ENCODE measurements at regions of chr5 and their contacts with region 1.

Region 1: DNA sequence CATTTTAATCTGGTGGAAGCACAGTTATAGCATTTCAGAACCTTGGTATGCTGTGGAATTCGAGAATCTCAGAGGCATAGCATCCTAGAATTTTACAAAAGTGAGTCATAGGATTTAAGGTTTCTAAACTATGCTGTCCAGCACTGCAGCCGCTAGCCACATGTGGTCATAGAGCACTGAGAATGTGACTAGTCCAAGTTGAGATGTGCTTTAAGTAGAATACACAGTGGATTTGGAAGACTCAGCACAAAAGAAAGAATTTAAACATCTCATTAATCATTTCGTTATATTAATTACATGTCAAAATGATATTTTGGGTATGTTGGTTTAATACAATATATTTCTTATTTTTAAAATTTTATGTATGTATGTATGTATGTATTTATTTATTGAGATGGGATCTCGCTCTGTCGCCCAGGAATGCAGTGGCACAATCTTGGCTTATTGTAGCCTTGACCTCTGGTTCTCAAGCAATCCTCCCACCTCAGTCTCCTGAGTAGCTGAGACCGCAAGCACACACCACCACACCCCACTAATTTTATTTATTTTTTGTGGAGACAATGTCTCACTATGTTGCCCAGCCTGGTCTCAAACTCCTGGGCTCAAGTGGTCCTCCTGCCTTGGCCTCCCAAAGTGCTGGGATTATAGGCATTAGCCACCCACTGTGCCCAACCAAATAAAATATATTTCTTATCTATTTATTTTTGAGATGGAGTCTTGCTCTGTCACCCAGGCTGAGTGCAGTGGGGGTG is 20.4 kb upstream of the RPS14 start:
- DNase-seq: peak in 1 of 2 experiments; percentile 15
- H3K4me3 ChIP-seq: no peak overlapping the region
- H3K4me3 Mint-ChIP-seq: no peak overlapping the region
- H3K27ac Mint-ChIP-seq: no peak overlapping the region
- H3K4me1 ChIP-seq: peaks cover 43% of the 10 kb centered on the region
- H3K4me1 Mint-ChIP-seq: peaks cover 21% of the 10 kb centered on the region
- H3K27me3 ChIP-seq: no peaks in the 10 kb centered on the region
- H3K27me3 Mint-ChIP-seq: no peaks in the 10 kb centered on the region
- CTCF ChIP-seq: no peak

Region 2: DNA sequence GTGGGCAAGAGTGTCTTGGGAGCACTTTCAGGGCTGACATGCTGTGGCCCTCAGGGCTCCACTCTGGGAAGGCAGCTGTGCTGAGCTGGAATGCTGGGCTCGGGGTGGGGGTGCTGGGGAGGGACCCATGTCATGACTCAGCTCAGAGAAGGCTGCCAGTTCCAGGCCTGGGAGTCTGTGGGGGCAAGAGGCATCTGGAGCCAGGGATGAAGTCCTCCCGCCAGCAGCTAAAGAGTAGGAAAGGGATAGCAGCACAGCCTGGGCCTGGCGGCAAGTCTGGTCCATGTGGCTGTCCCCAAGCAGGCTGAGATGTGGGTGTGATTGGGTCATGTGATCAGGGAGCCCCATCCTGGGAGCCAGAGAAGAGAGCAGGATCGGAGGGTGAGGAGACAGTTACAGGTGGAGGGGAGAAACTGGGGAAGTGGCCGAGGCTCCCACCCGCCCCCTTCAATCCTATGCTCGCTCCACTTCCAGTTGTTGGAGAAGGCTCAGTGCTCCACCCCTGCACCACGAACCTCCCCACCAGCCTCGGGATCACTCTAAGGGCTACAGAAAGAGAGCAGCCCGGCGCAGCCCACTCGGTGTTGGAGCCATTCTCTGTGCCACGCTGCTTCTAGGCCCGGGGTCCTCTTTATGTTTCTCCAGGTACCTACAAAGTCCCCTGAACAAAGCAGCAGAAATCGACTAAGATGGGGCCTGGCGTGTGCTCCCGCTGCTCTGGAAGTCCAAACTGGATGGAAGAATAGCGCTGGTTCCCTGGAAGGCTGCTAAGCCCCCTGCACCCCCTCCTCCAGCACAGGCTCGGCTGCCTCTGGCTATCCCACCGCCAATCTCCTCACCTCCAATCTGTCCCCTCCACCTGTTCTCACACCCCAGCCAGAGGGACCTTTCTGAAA is 326.3 kb before region 1 on chr5:
- CTCF ChIA-PET with region 1: no interaction called
- POLR2A ChIA-PET with region 1: no interaction called
- intact Hi-C with region 1: no loop called
- DNase-seq: peak; percentile 34 to 69
- H3K4me3 ChIP-seq: no peak overlapping the region
- H3K4me3 Mint-ChIP-seq: peak overlapping the region; percentile 37
- H3K27ac Mint-ChIP-seq: peak overlapping the region; percentile 92
- H3K4me1 ChIP-seq: peaks cover 72% of the 10 kb centered on the region
- H3K4me1 Mint-ChIP-seq: peaks cover 66% of the 10 kb centered on the region
- H3K27me3 ChIP-seq: no peaks in the 10 kb centered on the region
- H3K27me3 Mint-ChIP-seq: no peaks in the 10 kb centered on the region
- CTCF ChIP-seq: no peak

Region 3: DNA sequence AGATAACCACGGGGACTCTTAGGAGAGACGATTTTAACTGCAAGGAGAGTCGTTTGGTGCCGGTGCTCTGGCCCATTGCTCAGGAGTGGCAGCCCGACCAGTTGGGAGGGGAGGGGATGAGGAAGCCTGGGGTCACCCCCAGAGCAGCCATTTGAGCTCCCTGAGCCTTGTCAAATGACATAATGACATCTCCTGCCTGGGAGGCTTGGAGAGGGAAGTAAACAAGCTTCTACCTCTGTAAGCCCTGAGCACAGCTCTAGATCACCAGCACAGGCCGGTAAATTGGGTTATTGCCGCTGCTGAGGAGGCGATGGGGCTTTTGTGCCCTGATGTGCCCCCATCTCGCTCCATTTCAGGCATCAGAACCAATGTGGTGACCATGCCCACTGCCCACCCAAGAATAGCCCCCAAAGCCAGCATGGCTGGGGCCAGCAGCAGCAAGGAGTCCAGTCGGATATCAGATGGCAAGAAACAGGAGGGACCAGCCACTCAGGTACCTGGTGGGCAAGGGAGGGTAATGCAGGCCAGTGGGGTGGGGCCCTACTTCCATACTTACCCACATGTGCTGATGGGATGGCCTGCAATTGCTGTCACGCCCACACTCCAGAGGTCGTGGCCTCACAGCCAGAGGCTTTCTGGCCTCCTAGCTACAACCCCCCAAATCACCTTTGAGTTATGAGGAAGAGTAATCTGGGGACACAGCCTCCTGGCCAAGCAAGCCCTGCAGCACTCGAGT is 80.2 kb before region 1 on chr5:
- CTCF ChIA-PET with region 1: no interaction called
- POLR2A ChIA-PET with region 1: no interaction called
- intact Hi-C with region 1: no loop called
- DNase-seq: no peak
- H3K4me3 ChIP-seq: no peak overlapping the region
- H3K4me3 Mint-ChIP-seq: no peak overlapping the region
- H3K27ac Mint-ChIP-seq: no peak overlapping the region
- H3K4me1 ChIP-seq: no peaks in the 10 kb centered on the region
- H3K4me1 Mint-ChIP-seq: no peaks in the 10 kb centered on the region
- H3K27me3 ChIP-seq: no peaks in the 10 kb centered on the region
- H3K27me3 Mint-ChIP-seq: no peaks in the 10 kb centered on the region
- CTCF ChIP-seq: no peak

Region 4: DNA sequence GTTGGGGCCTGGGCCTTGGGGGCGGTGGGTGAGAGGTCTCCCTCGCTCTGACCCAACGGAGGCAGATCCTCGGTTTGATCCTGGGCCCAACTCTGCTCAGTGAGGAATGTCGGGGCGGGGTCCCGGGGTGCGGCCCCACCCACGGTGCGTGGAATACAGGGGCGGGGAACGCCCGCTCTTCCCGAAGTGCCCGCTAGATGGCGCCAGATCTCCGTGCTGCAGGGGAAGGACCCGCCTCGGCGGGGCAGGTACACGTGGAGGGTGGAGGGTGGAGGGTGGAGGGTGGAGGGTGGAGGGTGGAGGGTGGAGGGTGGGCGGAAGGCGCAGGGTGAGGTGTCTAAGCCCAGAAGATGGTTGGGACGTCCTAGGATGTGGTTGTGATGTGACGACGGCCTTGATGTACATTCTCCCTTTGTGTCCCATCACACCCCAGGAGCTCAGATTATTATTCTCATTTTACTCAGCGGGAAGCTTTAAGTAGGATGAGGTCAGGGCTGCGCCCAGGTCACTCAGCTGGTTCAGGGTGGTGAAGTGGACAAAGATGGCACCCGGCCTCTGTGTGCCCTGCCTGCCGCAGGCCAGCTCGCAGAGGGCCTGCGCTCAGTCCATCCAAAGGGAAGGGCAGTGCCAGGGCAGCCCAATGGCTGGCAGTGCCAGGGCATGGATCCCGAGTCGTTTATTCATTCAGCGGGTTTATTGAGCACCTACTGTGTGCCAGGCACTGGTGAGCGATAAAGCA is 10.9 kb before region 1 on chr5:
- CTCF ChIA-PET with region 1: interaction called, 14 read pairs
- POLR2A ChIA-PET with region 1: no interaction called
- intact Hi-C with region 1: loop called (anchors 1 kb)
- DNase-seq: peak; percentile 90 to 95
- H3K4me3 ChIP-seq: no peak overlapping the region
- H3K4me3 Mint-ChIP-seq: peak overlapping the region; percentile 25
- H3K27ac Mint-ChIP-seq: peak overlapping the region; percentile 19
- H3K4me1 ChIP-seq: peaks cover 10% of the 10 kb centered on the region
- H3K4me1 Mint-ChIP-seq: peaks cover 15% of the 10 kb centered on the region
- H3K27me3 ChIP-seq: no peaks in the 10 kb centered on the region
- H3K27me3 Mint-ChIP-seq: no peaks in the 10 kb centered on the region
- CTCF ChIP-seq: peak; percentile 86 to 91

Region 5: DNA sequence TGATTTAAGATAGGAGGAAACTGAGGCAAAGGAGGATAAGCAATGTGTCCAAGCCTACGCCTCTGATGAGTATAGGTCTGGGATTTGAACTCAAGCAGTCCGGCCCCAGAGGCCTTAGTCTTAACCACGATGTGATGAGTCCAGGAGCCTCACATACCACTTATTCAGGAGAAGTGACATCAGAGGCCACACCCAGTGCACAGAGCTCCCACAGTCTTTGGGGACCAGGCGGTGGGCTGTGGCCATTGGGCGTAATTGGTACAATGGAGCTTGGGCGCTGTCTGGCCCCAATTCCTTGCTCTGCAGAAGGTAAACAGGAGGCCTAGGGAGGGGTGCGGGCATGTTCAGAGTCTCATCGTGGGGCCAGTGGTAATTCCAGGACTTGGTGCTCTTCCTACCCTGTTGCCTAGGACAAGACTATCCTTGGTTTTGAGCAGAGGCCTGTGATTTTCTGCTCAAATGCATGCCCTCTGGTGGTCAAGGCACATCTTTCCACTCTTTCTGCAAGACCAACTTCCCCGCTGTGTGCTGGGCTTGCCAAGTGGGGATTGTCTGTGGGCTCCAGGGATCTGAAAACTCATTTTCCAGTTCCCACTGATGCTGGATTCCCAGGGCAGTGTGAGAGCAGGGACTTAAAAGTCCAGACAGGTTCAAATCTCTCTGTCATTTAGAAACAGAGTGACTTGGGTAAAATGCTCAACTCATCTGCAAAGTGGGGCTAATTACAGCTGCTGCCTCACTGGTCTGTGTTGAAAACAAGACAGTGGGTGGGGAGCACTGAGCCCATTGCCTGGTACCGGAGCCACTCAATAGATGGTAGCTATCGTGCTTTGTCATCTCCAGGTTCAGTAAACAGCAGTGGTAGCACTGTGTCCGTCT is 53.8 kb after region 1 on chr5:
- CTCF ChIA-PET with region 1: interaction called, 4 read pairs
- POLR2A ChIA-PET with region 1: no interaction called
- intact Hi-C with region 1: loop called (anchors 1 kb)
- DNase-seq: peak; percentile 69
- H3K4me3 ChIP-seq: no peak overlapping the region
- H3K4me3 Mint-ChIP-seq: peak overlapping the region; percentile 51
- H3K27ac Mint-ChIP-seq: peak overlapping the region; percentile 63
- H3K4me1 ChIP-seq: peaks cover 38% of the 10 kb centered on the region
- H3K4me1 Mint-ChIP-seq: peaks cover 59% of the 10 kb centered on the region
- H3K27me3 ChIP-seq: no peaks in the 10 kb centered on the region
- H3K27me3 Mint-ChIP-seq: no peaks in the 10 kb centered on the region
- CTCF ChIP-seq: peak; percentile 65 to 70

Region 6: GRCh38 chr5:150640311-150641005 is 170.6 kb after region 1 on chr5 and contains the start of gene SYNPO:
- CTCF ChIA-PET with region 1: no interaction called
- POLR2A ChIA-PET with region 1: no interaction called
- intact Hi-C with region 1: loop called (anchors 5 kb)
- DNase-seq: peak; percentile 56 to 60
- H3K4me3 ChIP-seq: peak within 1 kb of the TSS; percentile 33
- H3K4me3 Mint-ChIP-seq: peak within 1 kb of the TSS; percentile 61
- H3K27ac Mint-ChIP-seq: peak within 1 kb of the TSS; percentile 79
- H3K4me1 ChIP-seq: peaks cover 80% of the 10 kb centered on the region
- H3K4me1 Mint-ChIP-seq: peaks cover 52% of the 10 kb centered on the region
- H3K27me3 ChIP-seq: no peaks in the 10 kb centered on the region
- H3K27me3 Mint-ChIP-seq: no peaks in the 10 kb centered on the region
- CTCF ChIP-seq: no peak
- total RNA-seq, gene SYNPO: 22.4 and 25.1 TPM in 2 replicates

Measured in Caco-2 (cell line).